Naive thymus-derived CD4-positive, alpha-beta T cell (primary cell): ENCODE measurements at regions of chr21 and their contacts with region 1.

Region 1: DNA sequence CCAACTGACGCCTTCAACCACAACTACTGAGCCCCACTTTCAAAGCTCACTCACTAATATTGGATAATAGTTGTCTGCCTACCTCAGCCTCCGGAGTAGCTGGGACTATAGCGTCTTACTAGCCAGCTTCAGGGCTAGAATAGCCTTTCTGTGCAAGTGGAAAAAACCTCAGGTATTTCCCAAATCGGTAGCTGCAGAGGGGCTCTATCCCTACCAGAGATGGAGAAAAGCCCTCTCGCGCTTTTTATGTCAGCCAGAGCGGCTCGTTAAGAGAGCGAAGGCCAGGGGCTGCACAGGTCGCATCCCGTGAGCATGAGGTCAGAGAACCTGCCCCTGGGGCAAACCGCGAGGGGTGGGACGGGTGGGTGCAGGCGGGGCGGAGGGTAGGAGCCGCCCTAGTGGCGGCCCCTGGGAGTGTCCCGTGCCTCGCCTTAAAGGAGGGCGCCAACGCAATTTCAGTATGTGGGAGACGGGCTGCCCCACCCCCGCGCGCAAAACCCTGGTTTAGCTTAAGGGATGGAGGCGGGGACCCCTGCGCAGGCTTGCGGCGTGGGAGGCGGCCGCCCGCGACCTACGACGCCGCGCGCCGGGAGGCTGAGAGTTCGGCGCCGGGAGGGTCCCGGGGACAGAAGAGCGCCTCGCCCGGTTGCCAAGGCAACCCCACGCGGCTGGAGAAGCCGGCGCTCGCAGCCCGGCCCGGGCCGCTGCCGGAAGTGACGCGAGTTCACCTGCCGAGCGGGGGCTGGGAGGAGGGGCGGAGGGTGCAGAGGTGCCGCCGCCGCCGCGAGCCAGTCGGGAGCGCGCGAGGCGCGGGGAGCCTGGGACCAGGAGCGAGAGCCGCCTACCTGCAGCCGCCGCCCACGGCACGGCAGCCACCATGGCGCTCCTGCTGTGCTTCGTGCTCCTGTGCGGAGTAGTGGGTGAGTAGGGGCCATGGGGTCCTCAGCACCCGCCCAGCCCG is at the start of gene CXADR:
- DNase-seq: peak; percentile 73 to 86 (median 84)
- ATAC-seq: peak; percentile 89
- H3K4me3 ChIP-seq: peak within 1 kb of the TSS; percentile 66
- H3K4me3 Mint-ChIP-seq: peak within 1 kb of the TSS; percentile 81 to 92 (median 90)
- H3K27ac ChIP-seq: peak within 1 kb of the TSS; percentile 59
- H3K27ac Mint-ChIP-seq: peak within 1 kb of the TSS; percentile 30 to 92 (median 55)
- H3K4me1 ChIP-seq: peaks cover 11% of the 10 kb centered on the region in 2 donors
- H3K4me1 Mint-ChIP-seq: peaks cover 15 to 26% (median 22%) of the 10 kb centered on the region in 7 donors
- H3K27me3 ChIP-seq: no peaks in the 10 kb centered on the region
- H3K27me3 Mint-ChIP-seq: peaks cover 0 to 60% (median 3%) of the 10 kb centered on the region in 5 donors
- total RNA-seq, gene CXADR: 0.12 to 1.8 (median 0.51) TPM

Region 2: DNA sequence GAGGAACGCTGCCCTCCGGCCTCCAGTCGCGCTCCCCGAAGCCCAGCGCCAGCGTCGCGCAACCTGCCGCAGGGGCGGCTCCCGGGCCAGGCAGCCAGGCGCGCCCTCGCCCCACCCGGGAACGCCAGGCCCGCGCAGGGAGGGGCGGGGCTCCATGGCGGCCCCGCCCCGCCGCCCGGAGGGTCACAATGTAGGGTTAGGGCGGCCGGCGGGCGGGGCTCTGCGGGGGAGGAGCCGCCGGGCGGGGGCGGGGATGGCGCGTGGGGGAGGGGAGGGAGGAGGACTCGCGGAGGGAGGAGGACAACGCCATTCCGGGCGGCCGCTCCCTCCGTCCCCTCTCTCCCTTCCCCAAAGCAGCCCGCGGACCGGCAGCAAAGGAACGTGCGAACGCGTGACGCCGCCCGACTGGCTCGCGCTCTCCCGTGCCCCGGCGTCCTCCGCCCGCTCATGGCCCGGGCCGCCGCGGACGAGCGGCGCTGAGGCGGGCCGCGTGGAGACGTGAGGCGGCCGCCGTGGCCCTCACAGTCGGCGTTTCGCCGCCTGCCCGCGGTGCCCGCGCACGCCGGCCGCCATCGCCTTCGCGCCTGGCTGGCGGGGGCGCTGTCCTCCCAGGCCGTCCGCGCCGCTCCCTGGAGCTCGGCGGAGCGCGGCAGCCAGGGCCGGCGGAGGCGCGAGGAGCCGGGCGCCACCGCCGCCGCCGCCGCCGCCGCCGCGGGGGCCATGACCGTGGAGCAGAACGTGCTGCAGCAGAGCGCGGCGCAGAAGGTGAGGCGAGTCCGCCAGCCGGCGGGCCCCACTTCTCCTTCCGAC is 1782.7 kb before region 1 on chr21 and contains the start of gene USP25:
- CTCF ChIA-PET with region 1: no interaction called
- POLR2A ChIA-PET with region 1: no interaction called
- intact Hi-C with region 1: loop called in 1 of 2 experiments (anchors 2 kb)
- DNase-seq: peak; percentile 76 to 85 (median 82)
- ATAC-seq: peak; percentile 93
- H3K4me3 ChIP-seq: peak within 1 kb of the TSS; percentile 58
- H3K4me3 Mint-ChIP-seq: peak within 1 kb of the TSS; percentile 92 to 98 (median 97)
- H3K27ac ChIP-seq: peak within 1 kb of the TSS; percentile 83
- H3K27ac Mint-ChIP-seq: peak within 1 kb of the TSS; percentile 85 to 97 (median 94)
- H3K4me1 ChIP-seq: peaks cover 19 to 27% of the 10 kb centered on the region in 2 donors
- H3K4me1 Mint-ChIP-seq: peaks cover 9 to 45% (median 33%) of the 10 kb centered on the region in 7 donors
- H3K27me3 ChIP-seq: no peaks in the 10 kb centered on the region
- H3K27me3 Mint-ChIP-seq: peaks cover 0 to 33% (median 0%) of the 10 kb centered on the region in 5 donors
- total RNA-seq, gene USP25: 51.0 to 67.4 (median 56.5) TPM

Region 3: DNA sequence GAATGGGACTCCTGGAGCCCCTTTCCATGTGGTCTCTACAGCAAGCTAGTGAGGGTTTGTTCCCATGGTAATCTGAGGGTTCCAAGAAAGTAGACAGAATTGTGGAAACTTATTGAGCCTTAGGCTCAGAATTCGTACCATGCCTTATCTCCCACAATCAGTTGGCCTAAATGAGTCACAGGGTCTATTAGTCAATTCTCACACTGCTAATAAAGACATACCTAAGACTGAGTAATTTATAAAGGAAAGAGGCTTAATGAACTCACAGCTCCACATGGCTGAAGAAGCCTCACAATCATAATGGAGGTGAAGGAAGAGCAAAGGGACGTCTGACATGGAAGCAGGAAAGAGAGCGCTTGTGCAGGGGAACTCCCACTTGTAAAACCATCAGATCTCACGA is 106.3 kb before region 1 on chr21:
- CTCF ChIA-PET with region 1: no interaction called
- POLR2A ChIA-PET with region 1: no interaction called
- intact Hi-C with region 1: loop called in 1 of 2 experiments (anchors 5 kb)
- DNase-seq: no peak
- ATAC-seq: no peak
- H3K4me3 ChIP-seq: no peak overlapping the region
- H3K4me3 Mint-ChIP-seq: no peak overlapping the region
- H3K27ac ChIP-seq: no peak overlapping the region
- H3K27ac Mint-ChIP-seq: no peak overlapping the region
- H3K4me1 ChIP-seq: no peaks in the 10 kb centered on the region
- H3K4me1 Mint-ChIP-seq: no peaks in the 10 kb centered on the region
- H3K27me3 ChIP-seq: no peaks in the 10 kb centered on the region
- H3K27me3 Mint-ChIP-seq: peaks cover 0 to 6% (median 0%) of the 10 kb centered on the region in 5 donors

Region 4: GRCh38 chr21:17585875-17586450 is 73.4 kb after region 1 on chr21:
- CTCF ChIA-PET with region 1: no interaction called
- POLR2A ChIA-PET with region 1: no interaction called
- intact Hi-C with region 1: loop called in 1 of 2 experiments (anchors 5 kb)
- DNase-seq: peak in 7 of 9 donors; percentile 15 to 47 (median 38)
- ATAC-seq: peak; percentile 57
- H3K4me3 ChIP-seq: no peak overlapping the region
- H3K4me3 Mint-ChIP-seq: no peak overlapping the region
- H3K27ac ChIP-seq: no peak overlapping the region
- H3K27ac Mint-ChIP-seq: no peak overlapping the region
- H3K4me1 ChIP-seq: no peaks in the 10 kb centered on the region
- H3K4me1 Mint-ChIP-seq: no peaks in the 10 kb centered on the region
- H3K27me3 ChIP-seq: no peaks in the 10 kb centered on the region
- H3K27me3 Mint-ChIP-seq: no peaks in the 10 kb centered on the region